ENCODE measurements at regions of chr22 and their contacts with region 1.

Region 1: GRCh38 chr22:38490915-38491314 is 15.2 kb downstream of the DDX17 start:
- H3K4me3 ChIP-seq: no peak overlapping the region
- H3K27ac ChIP-seq: no peak overlapping the region
- H3K4me1 ChIP-seq: no peaks in the 10 kb centered on the region
- CTCF ChIP-seq: no peak

Region 2: DNA sequence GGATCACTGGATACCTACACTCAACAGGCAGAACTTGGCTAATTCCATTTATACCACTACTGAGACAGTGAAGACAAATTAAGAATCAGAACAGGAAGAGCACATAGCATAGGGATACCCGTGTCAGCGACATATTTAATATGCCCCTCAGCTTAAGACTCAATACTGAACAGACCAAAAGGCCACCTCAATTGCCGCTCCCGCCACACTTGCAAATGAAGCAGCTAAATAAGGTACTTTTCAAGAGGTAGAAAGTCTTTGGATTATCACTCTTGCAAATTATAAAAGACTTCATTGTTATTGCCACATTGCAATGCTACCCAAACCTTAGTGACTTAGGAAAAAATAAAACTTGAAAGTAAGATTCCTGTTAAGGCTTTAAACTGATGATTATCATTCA is 12.1 kb after region 1 on chr22:
- CTCF ChIA-PET with region 1: interaction called, 4 read pairs
- POLR2A ChIA-PET with region 1: interaction called, 19 read pairs
- H3K4me3 ChIP-seq: peak overlapping the region; percentile 79
- H3K27ac ChIP-seq: peak overlapping the region; percentile 1; the same call in 1 of the 2 replicates
- H3K4me1 ChIP-seq: 0 out of 2 replicates have a peak, but pooled peaks cover 5% of the 10 kb centered on the region
- CTCF ChIP-seq: no peak